ENCODE measurements at regions of chr7 and their contacts with region 1.

Region 1: GRCh38 chr7:138625849-138626230 is 75.3 kb downstream of the SVOPL start:
- DNase-seq: peak in 7 of 10 donors; percentile 7 to 55 (median 28)
- ATAC-seq: peak; percentile 80 to 85
- H3K4me3 Mint-ChIP-seq: peak overlapping the region; percentile 56 to 77 (median 68)
- H3K27ac Mint-ChIP-seq: peak overlapping the region; percentile 43 to 87 (median 81)
- H3K4me1 Mint-ChIP-seq: peaks cover 23 to 47% (median 44%) of the 10 kb centered on the region in 4 donors
- H3K27me3 Mint-ChIP-seq: no peaks in the 10 kb centered on the region

Region 2: GRCh38 chr7:138610671-138611170 is 15.1 kb before region 1 on chr7:
- POLR2A ChIA-PET with region 1: no interaction called
- DNase-seq: no peak
- ATAC-seq: no peak
- H3K4me3 Mint-ChIP-seq: no peak overlapping the region
- H3K27ac Mint-ChIP-seq: peak overlapping the region in 3 of 10 donors; percentile 19 to 54 (median 28)
- H3K4me1 Mint-ChIP-seq: peaks cover 9 to 24% (median 16%) of the 10 kb centered on the region in 4 donors
- H3K27me3 Mint-ChIP-seq: no peaks in the 10 kb centered on the region

Region 3: GRCh38 chr7:138684360-138684759 is 58.5 kb after region 1 on chr7:
- POLR2A ChIA-PET with region 1: no interaction called
- DNase-seq: no peak
- ATAC-seq: no peak
- H3K4me3 Mint-ChIP-seq: no peak overlapping the region
- H3K27ac Mint-ChIP-seq: no peak overlapping the region
- H3K4me1 Mint-ChIP-seq: peaks cover 0 to 4% (median under 1%) of the 10 kb centered on the region in 4 donors
- H3K27me3 Mint-ChIP-seq: peaks cover 0 to 4% (median 3%) of the 10 kb centered on the region in 5 donors

Region 4: DNA sequence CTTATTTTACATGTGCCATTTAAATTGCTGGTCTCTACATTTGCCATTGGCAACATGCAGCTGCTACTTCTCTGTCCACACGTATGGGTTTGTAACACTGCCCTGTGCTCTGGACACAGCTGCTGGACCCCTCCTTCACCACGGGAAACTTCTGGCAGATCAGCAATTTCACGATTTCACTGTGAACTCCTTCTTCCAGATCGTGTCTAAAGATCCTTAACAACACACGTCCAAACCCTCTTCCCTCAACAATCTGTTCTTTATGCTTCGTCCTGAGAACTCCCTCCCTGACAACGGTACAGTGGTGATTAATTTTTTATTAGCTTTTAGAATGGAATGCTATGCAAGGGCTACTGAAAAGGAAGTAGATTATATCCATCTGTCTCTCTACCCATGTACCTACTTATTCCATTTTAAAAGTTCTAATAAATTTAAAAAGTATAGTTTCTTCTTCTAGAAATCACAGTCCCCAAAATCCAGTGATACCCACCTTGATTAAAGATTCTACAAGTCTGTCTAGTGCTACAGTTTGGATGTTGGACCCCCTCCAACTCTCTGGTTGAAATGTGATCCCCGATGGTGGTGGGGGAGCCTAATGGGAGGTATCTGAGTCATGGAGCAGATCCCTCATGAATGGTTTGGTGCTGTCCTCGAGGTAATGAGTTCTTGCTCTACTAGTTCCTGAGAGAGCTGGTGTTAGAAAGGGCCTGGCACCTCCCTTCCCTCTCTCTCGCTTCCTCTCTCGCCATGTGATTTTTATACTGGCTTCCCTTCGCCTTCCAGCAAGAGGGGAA is 274.4 kb after region 1 on chr7:
- POLR2A ChIA-PET with region 1: interaction called, 10 read pairs
- DNase-seq: no peak
- ATAC-seq: no peak
- H3K4me3 Mint-ChIP-seq: no peak overlapping the region
- H3K27ac Mint-ChIP-seq: no peak overlapping the region
- H3K4me1 Mint-ChIP-seq: peaks cover 39 to 61% (median 53%) of the 10 kb centered on the region in 4 donors
- H3K27me3 Mint-ChIP-seq: peaks cover 0 to 6% (median 4%) of the 10 kb centered on the region in 5 donors

Measured in naive thymus-derived CD8-positive, alpha-beta T cell (primary cell).